ENCODE measurements at regions of chr20 and their contacts with region 1.

Region 1: DNA sequence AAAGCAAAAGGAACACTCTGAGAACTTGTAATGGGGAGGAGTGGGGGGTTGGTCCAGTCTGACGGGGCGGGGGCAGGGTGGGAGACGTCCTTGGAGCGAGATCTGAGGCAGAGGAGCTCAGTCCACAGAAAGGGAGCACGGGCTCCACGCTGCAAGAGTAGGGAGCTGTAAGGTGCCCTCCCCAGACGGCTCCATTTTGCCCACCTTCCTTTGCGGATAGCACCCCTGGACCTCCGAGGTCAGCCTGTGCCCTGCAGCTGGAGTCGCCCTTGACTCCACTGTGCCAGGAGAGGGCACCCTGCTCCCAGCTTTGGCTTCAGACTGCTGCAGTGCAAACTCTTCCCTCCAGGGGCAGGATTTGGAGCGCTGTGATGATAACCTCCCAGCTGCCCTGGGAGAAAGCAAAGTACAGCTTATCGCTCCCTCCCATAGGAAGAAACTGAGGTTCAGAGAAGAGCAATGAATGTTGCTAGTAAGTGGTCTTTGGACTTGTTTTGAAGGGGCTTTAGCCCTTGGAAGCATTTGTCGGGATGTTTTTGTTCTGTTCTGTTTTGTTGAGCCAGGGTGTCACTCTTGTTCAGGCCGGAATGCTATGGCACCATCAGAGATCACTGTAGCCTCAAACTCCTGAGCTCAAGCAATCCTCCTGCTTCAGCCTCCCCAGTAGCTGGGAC is 9.5 kb upstream of the AHCY start:
- DNase-seq: peak; percentile 91
- H3K4me3 ChIP-seq: peak overlapping the region; percentile 30 to 55; a peak in 3 of 4 replicates
- H3K27ac ChIP-seq: no peak overlapping the region
- H3K4me1 ChIP-seq: peaks cover 0 to 4% of the 10 kb centered on the region in 2 experiments; a peak in 2 of 4 replicates
- H3K27me3 ChIP-seq: no peaks in the 10 kb centered on the region
- CTCF ChIP-seq: peak; percentile 99
- EP300 ChIP-seq: no peak
- RAD21 ChIP-seq: peak; percentile 99

Region 2: GRCh38 chr20:33853507-33853813 is 459.2 kb before region 1 on chr20:
- CTCF ChIA-PET with region 1: no interaction called
- POLR2A ChIA-PET with region 1: no interaction called
- DNase-seq: no peak
- H3K4me3 ChIP-seq: no peak overlapping the region
- H3K27ac ChIP-seq: no peak overlapping the region
- H3K4me1 ChIP-seq: no peaks in the 10 kb centered on the region; a peak in 1 of 4 replicates
- H3K27me3 ChIP-seq: no peaks in the 10 kb centered on the region
- CTCF ChIP-seq: no peak
- EP300 ChIP-seq: no peak
- RAD21 ChIP-seq: no peak

Region 3: DNA sequence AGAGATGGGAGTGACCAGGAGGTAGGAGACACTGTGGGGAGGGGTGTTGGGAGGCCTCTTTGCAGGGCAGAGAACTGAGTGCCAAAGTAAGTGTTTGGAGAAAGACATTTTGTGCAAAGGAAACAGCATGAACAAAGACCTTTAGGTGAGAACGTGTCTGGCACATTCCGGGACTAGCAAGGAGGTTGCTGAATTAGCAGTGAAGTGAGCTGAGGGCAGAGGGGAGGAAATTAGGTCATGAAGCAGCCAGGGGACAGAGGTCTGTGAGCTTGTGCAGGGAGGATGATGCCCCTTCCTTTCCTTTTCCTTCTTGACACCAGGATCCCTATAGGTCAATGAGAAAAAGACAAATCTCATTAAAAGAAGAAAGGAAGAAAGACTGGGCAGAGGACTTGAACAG is 11.9 kb after region 1 on chr20:
- CTCF ChIA-PET with region 1: interaction called, 28 read pairs
- POLR2A ChIA-PET with region 1: no interaction called
- DNase-seq: no peak
- H3K4me3 ChIP-seq: no peak overlapping the region
- H3K27ac ChIP-seq: no peak overlapping the region
- H3K4me1 ChIP-seq: no peaks in the 10 kb centered on the region
- H3K27me3 ChIP-seq: no peaks in the 10 kb centered on the region
- CTCF ChIP-seq: no peak
- EP300 ChIP-seq: no peak
- RAD21 ChIP-seq: no peak

Region 4: DNA sequence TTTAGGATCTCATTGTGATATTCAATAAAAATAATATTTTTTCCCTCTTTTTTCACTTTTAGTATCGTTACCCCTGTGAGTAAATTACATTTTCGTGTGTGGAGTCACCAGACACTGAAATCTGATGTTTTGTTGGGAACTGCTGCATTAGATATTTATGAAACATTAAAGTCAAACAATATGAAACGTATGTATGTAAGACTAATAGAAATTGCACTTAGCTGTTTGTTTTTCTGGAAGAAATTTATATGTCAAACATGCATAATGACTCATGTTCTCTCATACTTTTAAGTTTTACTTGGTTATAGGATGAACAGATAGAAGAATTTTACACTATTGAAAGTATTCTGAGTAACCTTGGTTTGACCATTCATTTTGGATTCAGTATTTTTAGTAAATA is 99.8 kb after region 1 on chr20:
- CTCF ChIA-PET with region 1: interaction called, 15 read pairs
- POLR2A ChIA-PET with region 1: no interaction called
- DNase-seq: no peak
- H3K4me3 ChIP-seq: no peak overlapping the region
- H3K27ac ChIP-seq: no peak overlapping the region
- H3K4me1 ChIP-seq: peaks cover 0 to 10% of the 10 kb centered on the region in 2 experiments; a peak in 1 of 4 replicates
- H3K27me3 ChIP-seq: no peaks in the 10 kb centered on the region
- CTCF ChIP-seq: no peak
- EP300 ChIP-seq: no peak
- RAD21 ChIP-seq: no peak

Region 5: GRCh38 chr20:34493646-34494045 is 181.0 kb after region 1 on chr20:
- CTCF ChIA-PET with region 1: interaction called, 23 read pairs
- POLR2A ChIA-PET with region 1: no interaction called
- DNase-seq: no peak
- H3K4me3 ChIP-seq: no peak overlapping the region
- H3K27ac ChIP-seq: no peak overlapping the region
- H3K4me1 ChIP-seq: no peaks in the 10 kb centered on the region
- H3K27me3 ChIP-seq: no peaks in the 10 kb centered on the region
- CTCF ChIP-seq: no peak
- EP300 ChIP-seq: no peak
- RAD21 ChIP-seq: no peak

Region 6: DNA sequence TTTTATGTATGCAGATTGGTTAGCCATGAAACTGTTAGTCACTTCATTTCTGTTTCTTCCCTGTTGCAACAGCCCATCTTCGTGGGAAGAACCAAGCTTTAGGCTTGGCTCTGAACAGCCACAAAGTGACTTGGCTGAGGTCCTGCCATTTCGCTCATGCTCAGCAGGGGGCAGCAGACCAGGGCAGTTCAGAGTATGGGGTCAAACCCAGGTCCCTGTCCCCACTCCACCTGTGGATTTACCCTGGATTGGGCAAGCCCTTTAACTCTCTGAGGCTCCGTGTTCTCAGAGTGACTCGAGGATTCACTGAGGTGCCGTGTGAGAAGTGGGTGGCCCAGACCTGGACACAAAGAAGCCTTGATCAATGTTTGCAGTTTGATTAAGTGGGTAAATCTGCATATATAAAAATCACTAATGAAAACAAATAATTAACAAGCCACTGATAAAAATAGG is 226.0 kb after region 1 on chr20:
- CTCF ChIA-PET with region 1: interaction called, 26 read pairs
- POLR2A ChIA-PET with region 1: interaction called, 3 read pairs
- DNase-seq: peak; percentile 77
- H3K4me3 ChIP-seq: no peak overlapping the region
- H3K27ac ChIP-seq: no peak overlapping the region; a peak in 1 of 4 replicates
- H3K4me1 ChIP-seq: no peaks in the 10 kb centered on the region
- H3K27me3 ChIP-seq: no peaks in the 10 kb centered on the region
- CTCF ChIP-seq: peak; percentile 85
- EP300 ChIP-seq: no peak
- RAD21 ChIP-seq: peak; percentile 59

Region 7: GRCh38 chr20:34768096-34768495 is 455.4 kb after region 1 on chr20:
- CTCF ChIA-PET with region 1: interaction called, 41 read pairs
- POLR2A ChIA-PET with region 1: no interaction called
- DNase-seq: no peak
- H3K4me3 ChIP-seq: no peak overlapping the region
- H3K27ac ChIP-seq: no peak overlapping the region
- H3K4me1 ChIP-seq: peaks cover 2 to 7% of the 10 kb centered on the region in 2 experiments; a peak in 2 of 4 replicates
- H3K27me3 ChIP-seq: no peaks in the 10 kb centered on the region
- CTCF ChIP-seq: no peak
- EP300 ChIP-seq: no peak
- RAD21 ChIP-seq: no peak

Measured in SK-N-SH (cell line).